GM10248 (cell line): ENCODE measurements at regions of chr6 and their contacts with region 1.

Region 1: GRCh38 chr6:129498950-129499842 is 210.8 kb downstream of the ARHGAP18 start:
- DNase-seq: peak; percentile 32
- CTCF ChIP-seq: peak; percentile 41

Region 2: GRCh38 chr6:129340983-129341382 is 158.2 kb before region 1 on chr6:
- CTCF ChIA-PET with region 1: no interaction called
- POLR2A ChIA-PET with region 1: no interaction called
- DNase-seq: no peak
- CTCF ChIP-seq: no peak

Region 3: DNA sequence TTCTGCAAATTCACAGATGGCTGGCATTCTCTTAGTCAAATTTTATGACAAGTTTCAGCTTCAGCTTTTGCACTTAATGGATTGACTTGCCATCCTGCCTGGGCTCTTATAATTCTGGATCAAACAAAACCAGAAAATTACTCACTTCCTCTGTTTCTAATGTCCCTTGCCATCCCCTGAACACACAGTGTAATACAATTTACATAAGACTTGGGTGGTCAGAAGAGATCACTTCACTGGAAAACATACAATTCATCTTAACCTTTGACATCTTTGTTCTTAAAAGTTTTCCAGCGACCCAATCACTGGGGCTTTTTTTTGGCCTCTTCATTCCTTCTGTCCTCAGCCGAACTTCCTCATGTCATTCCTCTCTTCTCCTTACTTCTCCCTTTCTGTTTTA is 11.8 kb after region 1 on chr6:
- CTCF ChIA-PET with region 1: interaction called, 65 read pairs
- POLR2A ChIA-PET with region 1: no interaction called
- DNase-seq: no peak
- CTCF ChIP-seq: no peak

Region 4: DNA sequence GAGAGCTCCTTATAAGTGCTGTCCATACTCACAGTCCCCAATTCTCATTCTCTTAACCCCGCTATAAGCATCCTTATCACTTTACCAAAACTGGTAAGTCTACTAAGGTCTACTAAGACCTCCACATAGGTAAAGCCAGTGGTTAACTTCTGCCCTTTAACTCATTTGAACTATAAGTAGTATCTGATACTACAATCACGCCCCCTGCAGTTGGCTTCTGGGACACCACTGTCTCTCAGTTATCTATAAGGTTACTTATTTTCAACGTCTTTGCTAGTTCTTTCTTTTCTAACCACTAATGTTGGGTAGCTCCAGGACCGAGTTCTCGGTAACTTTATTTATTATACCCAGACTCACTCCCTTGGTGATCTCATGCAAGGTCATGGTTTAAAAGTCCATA is 68.2 kb after region 1 on chr6:
- CTCF ChIA-PET with region 1: interaction called, 13 read pairs
- POLR2A ChIA-PET with region 1: no interaction called
- DNase-seq: no peak
- CTCF ChIP-seq: peak; percentile 18

Region 5: GRCh38 chr6:129659590-129660345 is 160.6 kb after region 1 on chr6:
- CTCF ChIA-PET with region 1: no interaction called
- POLR2A ChIA-PET with region 1: no interaction called
- DNase-seq: no peak
- CTCF ChIP-seq: no peak

Region 6: DNA sequence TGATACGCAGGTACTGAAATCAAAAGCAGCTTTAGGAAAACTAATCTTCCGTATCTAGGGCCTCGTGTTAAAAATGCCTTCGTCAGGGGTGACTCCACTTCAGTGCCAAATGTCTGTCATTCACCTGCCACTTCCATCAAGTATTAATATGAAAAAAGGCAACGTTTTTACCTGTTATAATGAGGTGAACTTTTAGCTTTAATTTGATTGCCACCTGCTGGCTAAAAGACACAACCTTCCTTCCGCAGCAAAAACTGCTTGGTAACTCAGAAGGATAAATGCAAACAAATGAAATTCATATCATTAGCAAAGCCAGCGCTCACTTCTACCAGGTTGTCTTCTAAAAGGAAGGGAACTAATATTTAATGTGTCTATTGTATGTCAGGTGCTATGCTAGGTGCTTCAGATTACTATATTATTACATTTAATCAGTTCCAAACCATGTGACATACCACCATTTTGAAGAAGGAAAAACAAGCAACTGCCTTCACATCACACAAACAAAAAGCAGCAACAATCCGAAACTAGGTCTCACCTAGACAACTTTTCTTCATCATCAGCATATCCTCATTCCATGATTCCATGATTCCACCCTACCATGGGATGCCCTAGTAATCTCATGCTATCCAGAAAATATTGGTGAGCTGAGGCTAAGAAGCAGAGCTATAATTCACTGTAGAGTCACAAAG is 231.4 kb after region 1 on chr6:
- CTCF ChIA-PET with region 1: interaction called, 26 read pairs
- POLR2A ChIA-PET with region 1: no interaction called
- DNase-seq: peak; percentile 45
- CTCF ChIP-seq: peak; percentile 76

Region 7: DNA sequence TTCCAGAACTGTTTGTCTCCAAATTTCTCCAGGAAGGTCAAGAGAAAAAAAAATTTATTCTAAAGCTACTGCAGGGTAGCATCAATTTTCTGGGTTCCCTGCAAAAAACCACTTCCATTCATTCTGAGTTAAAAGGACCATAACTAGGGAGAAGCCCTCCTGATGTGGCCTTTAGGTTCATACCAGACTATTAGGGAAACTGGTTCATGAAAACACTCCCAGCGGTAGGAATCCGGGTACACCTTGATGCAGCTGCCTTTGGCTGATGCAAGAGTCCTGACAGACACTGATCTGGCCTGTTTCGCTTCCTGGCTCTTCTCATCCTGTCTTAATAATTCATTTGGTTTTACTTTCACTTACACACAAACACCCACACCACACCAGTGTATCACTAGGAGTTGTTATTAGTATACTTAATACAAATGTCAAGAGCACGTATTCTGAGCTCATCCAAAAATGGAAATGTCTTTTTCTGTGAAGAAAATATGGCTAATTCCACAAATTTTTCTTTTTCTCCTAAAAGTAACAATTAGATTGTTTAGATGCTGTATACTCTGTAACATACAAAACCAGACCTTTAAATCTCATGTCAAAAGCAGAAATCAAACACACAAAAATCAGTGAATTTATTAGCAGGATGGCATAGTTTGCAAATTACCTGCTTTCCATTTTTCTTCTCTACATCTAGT is 249.2 kb after region 1 on chr6:
- CTCF ChIA-PET with region 1: interaction called, 13 read pairs
- POLR2A ChIA-PET with region 1: no interaction called
- DNase-seq: peak; percentile 59
- CTCF ChIP-seq: no peak

Region 8: GRCh38 chr6:129774697-129775447 is 275.7 kb after region 1 on chr6:
- CTCF ChIA-PET with region 1: interaction called, 25 read pairs
- POLR2A ChIA-PET with region 1: no interaction called
- DNase-seq: peak; percentile 34
- CTCF ChIP-seq: peak; percentile 64

Region 9: DNA sequence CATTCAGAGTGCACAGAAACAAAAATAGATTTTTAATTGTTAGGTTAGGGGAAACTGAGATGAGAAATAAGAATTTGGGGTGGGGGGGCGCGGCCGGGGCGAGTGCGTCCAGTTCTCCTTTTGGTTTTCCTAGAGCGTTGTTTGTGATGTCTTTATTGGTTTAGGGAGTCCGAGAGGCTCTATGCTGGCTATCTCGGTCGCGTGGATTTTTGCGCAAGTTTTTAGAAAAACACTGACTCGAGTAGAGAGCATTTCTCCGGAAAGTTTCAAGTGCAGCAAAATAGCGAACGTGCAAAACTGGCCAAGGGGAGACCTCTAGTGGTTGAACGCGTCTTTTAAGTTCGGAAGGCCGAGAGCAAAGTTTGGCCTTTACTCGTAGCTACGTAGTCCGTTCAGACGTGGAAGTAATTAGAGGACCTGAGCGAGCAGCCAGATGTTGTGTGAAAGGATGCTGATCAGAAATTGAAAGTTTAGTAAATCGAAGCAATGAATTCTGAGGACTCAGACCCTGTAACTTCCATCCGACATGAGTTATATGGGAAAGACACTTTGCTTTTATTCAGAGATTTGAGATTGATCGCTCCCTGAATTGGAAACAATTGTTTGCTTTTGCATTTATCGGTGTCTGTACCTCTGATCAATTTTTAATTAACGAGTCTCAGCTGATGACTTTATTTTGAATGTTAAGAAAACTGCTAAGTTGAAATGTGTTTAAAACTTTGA is 521.9 kb after region 1 on chr6:
- CTCF ChIA-PET with region 1: interaction called, 24 read pairs
- POLR2A ChIA-PET with region 1: no interaction called
- DNase-seq: peak; percentile 65
- CTCF ChIP-seq: peak; percentile 85